ENCODE measurements at regions of chr2 and their contacts with region 1.

Region 1: DNA sequence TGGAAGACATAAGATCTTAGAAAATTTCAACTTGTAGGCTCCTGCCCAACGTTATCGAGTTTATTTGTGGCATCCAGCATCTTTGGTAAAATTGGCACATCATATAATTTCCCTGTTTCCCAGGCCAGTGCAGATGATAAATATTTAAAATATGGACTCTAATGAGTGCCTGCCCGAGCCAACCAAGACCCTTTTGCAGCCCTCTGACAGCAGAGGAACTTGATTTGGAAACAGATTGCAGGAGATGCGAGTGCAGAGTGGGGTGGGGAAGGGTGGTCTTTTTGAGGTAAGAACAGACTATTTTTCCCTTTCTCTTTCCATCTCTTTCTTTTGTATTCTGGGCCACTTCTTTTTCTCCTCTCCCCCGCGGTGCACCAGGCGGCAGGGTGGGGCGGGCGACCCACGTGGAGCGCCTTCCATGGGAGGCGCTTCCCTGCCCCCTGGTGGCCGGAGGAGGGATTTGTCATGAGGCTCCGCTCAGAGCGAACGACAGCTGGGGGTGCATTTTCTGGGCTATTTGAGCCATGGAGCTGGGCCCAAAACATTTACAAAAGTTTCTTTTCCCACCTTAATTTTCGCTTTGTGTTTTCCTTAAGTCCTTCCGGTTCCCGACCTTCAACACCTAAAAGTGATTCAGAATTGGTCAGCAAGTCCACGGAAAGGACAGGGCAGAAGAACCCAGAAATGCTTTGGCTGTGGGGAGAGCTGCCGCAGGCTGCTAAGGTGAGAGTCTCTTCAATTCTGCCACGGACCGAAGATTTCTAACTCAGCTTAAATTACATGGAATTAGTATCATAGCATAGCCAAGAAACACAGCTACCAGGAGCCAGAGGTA is 32.7 kb downstream of the LPIN1 start:
- DNase-seq: peak; percentile 95
- H3K4me3 ChIP-seq: peak overlapping the region in 1 of 2 experiments; percentile 33; a peak in 1 of 4 replicates
- H3K27ac ChIP-seq: no peak overlapping the region
- H3K4me1 ChIP-seq: peaks cover 6 to 10% of the 10 kb centered on the region in 2 experiments; a peak in 2 of 4 replicates
- H3K27me3 ChIP-seq: no peaks in the 10 kb centered on the region
- CTCF ChIP-seq: peak; percentile 99
- EP300 ChIP-seq: no peak
- RAD21 ChIP-seq: peak; percentile 97

Region 2: GRCh38 chr2:11716689-11717321 is 62.3 kb before region 1 on chr2:
- CTCF ChIA-PET with region 1: interaction called, 26 read pairs
- POLR2A ChIA-PET with region 1: interaction called, 3 read pairs
- DNase-seq: no peak
- H3K4me3 ChIP-seq: no peak overlapping the region
- H3K27ac ChIP-seq: no peak overlapping the region
- H3K4me1 ChIP-seq: peaks cover 0 to 51% of the 10 kb centered on the region in 2 experiments; a peak in 2 of 4 replicates
- H3K27me3 ChIP-seq: peaks cover 23% of the 10 kb centered on the region; the same call in 1 of the 2 replicates
- CTCF ChIP-seq: no peak
- EP300 ChIP-seq: no peak
- RAD21 ChIP-seq: no peak

Region 3: DNA sequence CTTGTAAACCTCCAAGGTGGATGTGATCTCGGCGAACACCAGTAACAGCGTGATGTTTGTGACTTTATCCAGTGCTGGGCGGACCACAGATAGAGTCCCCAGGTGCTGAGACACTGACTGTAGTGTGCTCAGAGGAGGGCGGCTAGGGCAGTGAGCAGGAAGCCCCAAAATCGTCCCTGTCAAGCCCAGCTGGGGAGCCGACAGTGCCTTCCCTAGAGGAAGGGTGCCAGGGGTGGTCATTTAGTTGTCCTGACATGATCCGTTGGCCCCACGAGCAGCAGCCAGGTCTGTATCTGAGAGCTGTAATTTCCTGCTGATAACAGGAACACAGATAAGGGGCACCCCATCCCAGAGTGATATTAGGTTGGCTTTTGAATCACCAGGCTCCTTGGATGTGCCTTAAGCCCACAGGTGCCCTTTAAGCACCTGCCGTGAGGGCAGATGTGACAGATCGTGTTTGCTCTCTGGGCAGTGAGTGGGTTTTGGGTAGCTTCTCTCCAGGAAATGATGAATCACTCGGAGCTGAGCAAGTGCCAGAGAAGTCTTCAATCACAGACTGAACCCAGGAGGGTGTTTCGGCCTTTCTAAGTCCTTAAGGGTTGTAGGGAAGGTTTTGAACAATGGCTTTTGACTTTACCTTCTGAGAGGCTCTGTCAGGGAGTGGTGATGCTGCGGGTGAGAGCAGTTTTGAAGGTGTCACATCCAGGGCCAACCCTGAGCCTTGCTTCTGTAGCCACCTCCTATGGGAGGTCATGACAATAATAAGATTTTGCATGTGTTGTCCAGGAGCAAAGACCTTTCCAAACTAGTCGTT is 25.0 kb before region 1 on chr2:
- CTCF ChIA-PET with region 1: interaction called, 454 read pairs
- POLR2A ChIA-PET with region 1: interaction called, 8 read pairs
- DNase-seq: peak; percentile 77
- H3K4me3 ChIP-seq: no peak overlapping the region
- H3K27ac ChIP-seq: peak overlapping the region in 1 of 2 experiments; percentile 73; a peak in 2 of 4 replicates
- H3K4me1 ChIP-seq: peaks cover 23 to 45% of the 10 kb centered on the region in 2 experiments
- H3K27me3 ChIP-seq: no peaks in the 10 kb centered on the region
- CTCF ChIP-seq: no peak
- EP300 ChIP-seq: peak in 1 of 2 experiments; percentile 67; a peak in 1 of 4 replicates
- RAD21 ChIP-seq: no peak

Region 4: DNA sequence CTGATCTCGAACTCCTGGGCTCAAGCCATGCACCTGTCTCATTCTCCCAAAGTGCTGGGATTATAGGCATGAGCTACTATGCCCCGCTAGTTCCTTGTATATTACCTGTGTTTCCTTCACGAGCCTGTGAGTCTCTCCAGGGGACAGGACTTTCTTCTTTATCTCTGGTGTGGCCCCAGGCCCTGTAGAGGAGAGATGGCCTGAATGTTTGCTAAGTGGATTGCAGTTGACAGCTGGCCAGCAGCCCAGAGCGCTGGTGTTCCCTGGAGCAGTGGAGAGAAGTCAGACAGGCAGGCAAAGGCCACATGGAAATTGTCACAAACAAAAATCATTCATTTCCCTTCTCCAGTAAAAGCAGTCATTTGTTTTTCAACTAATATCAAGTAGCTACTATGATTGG is 14.8 kb before region 1 on chr2:
- CTCF ChIA-PET with region 1: interaction called, 80 read pairs
- POLR2A ChIA-PET with region 1: interaction called, 7 read pairs
- DNase-seq: peak; percentile 89
- H3K4me3 ChIP-seq: no peak overlapping the region
- H3K27ac ChIP-seq: peak overlapping the region in 1 of 2 experiments; percentile 97; a peak in 2 of 4 replicates
- H3K4me1 ChIP-seq: peaks cover 0 to 48% of the 10 kb centered on the region in 2 experiments; a peak in 2 of 4 replicates
- H3K27me3 ChIP-seq: no peaks in the 10 kb centered on the region
- CTCF ChIP-seq: no peak
- EP300 ChIP-seq: peak in 1 of 2 experiments; percentile 97; a peak in 2 of 4 replicates
- RAD21 ChIP-seq: peak; percentile 32

Region 5: DNA sequence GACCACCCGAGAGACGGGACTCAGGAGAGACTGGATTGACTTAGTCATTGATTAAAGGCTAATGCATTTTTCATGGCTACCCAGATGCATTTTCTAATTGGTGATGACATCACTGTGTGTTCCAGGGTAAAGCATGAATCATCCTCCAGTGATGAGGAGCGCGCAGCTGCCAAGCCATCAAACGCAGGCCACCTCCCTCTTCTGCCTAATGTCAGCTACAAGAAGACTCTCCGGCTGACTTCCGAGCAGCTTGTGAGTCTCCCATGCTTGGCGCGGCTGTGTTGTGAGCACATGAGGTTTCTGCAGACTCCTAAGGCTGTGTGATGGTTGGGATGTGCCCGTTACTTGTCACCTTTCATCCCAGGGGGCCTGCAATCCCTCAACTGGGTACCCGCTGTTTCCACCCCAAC is 23.6 kb after region 1 on chr2:
- CTCF ChIA-PET with region 1: interaction called, 48 read pairs
- POLR2A ChIA-PET with region 1: no interaction called
- DNase-seq: no peak
- H3K4me3 ChIP-seq: no peak overlapping the region
- H3K27ac ChIP-seq: peak overlapping the region in 1 of 2 experiments; percentile 8; a peak in 2 of 4 replicates
- H3K4me1 ChIP-seq: peaks cover 6 to 8% of the 10 kb centered on the region in 2 experiments; a peak in 1 of 4 replicates
- H3K27me3 ChIP-seq: no peaks in the 10 kb centered on the region
- CTCF ChIP-seq: no peak
- EP300 ChIP-seq: no peak
- RAD21 ChIP-seq: no peak